ENCODE measurements at regions of chr15 and their contacts with region 1.

Region 1: GRCh38 chr15:69468241-69469121 is 15.9 kb downstream of the RPLP1 start:
- DNase-seq: peak; percentile 81 to 96
- H3K4me3 ChIP-seq: no peak overlapping the region
- H3K27ac ChIP-seq: peak overlapping the region; percentile 80
- H3K4me1 ChIP-seq: peaks cover 55% of the 10 kb centered on the region
- H3K27me3 ChIP-seq: no peaks in the 10 kb centered on the region
- CTCF ChIP-seq: no peak

Region 2: DNA sequence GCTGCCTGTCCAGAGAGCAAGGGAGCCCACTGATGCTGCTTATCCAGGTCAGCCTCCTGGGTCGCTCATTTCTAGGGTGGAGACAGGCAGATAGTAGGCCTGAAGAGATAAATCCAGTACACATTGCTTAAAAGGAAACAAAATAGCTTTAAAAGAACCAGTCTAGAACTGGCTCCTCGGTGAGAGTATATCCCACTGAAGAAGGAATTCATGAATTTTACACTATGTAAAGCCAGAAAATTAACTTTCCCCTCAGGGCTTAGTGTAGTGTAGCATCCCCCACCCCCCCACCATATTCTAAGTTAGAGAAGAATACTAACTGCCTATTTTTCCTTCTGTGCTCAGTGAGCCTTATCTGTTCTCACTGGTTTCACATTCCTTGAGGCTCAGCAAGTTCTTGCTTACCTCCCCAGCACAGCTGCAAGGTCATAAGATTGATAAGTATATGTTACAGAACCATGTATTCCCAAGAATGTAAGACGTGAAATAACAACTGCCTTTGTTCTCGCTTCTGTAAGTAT is 484.5 kb before region 1 on chr15:
- CTCF ChIA-PET with region 1: no interaction called
- POLR2A ChIA-PET with region 1: no interaction called
- intact Hi-C with region 1: no loop called
- DNase-seq: no peak
- H3K4me3 ChIP-seq: no peak overlapping the region
- H3K27ac ChIP-seq: no peak overlapping the region
- H3K4me1 ChIP-seq: no peaks in the 10 kb centered on the region
- H3K27me3 ChIP-seq: no peaks in the 10 kb centered on the region
- CTCF ChIP-seq: no peak

Region 3: GRCh38 chr15:69253156-69253555 is 215.3 kb before region 1 on chr15:
- CTCF ChIA-PET with region 1: no interaction called
- POLR2A ChIA-PET with region 1: no interaction called
- intact Hi-C with region 1: no loop called
- DNase-seq: peak in 1 of 2 experiments; percentile 16
- H3K4me3 ChIP-seq: no peak overlapping the region
- H3K27ac ChIP-seq: no peak overlapping the region
- H3K4me1 ChIP-seq: 0 out of 2 replicates have a peak, but pooled peaks cover 4% of the 10 kb centered on the region
- H3K27me3 ChIP-seq: no peaks in the 10 kb centered on the region
- CTCF ChIP-seq: no peak

Region 4: GRCh38 chr15:69868756-69869155 is 400.3 kb after region 1 on chr15:
- CTCF ChIA-PET with region 1: interaction called, 13 read pairs
- POLR2A ChIA-PET with region 1: no interaction called
- intact Hi-C with region 1: no loop called
- DNase-seq: no peak
- H3K4me3 ChIP-seq: no peak overlapping the region
- H3K27ac ChIP-seq: no peak overlapping the region
- H3K4me1 ChIP-seq: peaks cover 12% of the 10 kb centered on the region
- H3K27me3 ChIP-seq: no peaks in the 10 kb centered on the region
- CTCF ChIP-seq: no peak

Region 5: GRCh38 chr15:70643783-70644125 is 1175.3 kb after region 1 on chr15:
- CTCF ChIA-PET with region 1: no interaction called
- POLR2A ChIA-PET with region 1: no interaction called
- intact Hi-C with region 1: loop called (anchors 5 kb)
- DNase-seq: peak; percentile 23 to 87
- H3K4me3 ChIP-seq: no peak overlapping the region
- H3K27ac ChIP-seq: peak overlapping the region; percentile 68
- H3K4me1 ChIP-seq: peaks cover 27% of the 10 kb centered on the region
- H3K27me3 ChIP-seq: no peaks in the 10 kb centered on the region
- CTCF ChIP-seq: no peak